ENCODE measurements at regions of chr18 and their contacts with region 1.

Region 1: GRCh38 chr18:58529714-58530354 is 99.1 kb downstream of the ALPK2 start:
- DNase-seq: peak; percentile 69
- ATAC-seq: peak; percentile 34; the same call in 2 of the 3 replicates
- H3K4me3 ChIP-seq: no peak overlapping the region
- H3K27ac ChIP-seq: no peak overlapping the region
- H3K4me1 ChIP-seq: peaks cover 57% of the 10 kb centered on the region
- H3K27me3 ChIP-seq: no peaks in the 10 kb centered on the region
- CTCF ChIP-seq: peak; percentile 92
- EP300 ChIP-seq: peak in 1 of 2 experiments; percentile 9; a peak in 1 of 4 replicates
- POLR2A ChIP-seq: no peak
- RAD21 ChIP-seq: peak; percentile 90

Region 2: DNA sequence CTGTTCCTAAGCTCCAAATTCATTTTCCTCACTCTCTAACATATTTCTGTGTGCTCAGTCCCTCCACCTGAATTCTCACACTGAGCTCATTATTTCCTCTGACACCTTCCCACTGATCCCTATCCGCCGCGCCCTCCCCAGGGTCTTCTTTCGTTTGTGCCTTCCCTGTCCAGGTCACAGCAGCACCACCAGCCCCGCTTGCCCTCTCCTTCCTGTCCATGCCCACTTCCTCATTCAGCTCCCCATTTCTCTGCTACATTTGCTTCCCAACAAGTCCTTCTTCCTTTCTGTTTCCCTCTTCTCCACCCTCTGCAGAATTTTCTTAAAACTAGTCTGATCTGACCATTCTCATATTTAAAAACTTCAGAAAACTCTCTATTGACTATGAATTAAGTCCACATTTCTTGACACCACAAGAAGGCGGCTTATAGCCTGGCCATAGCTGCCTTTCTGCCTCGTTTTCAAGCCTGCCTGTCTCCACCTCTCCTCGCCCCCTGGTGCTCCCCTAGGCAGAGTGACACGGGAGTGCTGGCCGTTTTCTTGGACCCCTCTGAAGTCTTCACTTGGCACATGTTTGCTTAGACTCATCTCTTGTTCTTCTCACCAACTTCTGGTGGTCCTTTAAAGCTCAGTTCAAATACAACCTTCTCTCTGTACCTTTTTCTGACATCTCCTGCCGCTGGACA is 1521.7 kb before region 1 on chr18:
- CTCF ChIA-PET with region 1: no interaction called
- POLR2A ChIA-PET with region 1: no interaction called
- in situ Hi-C with region 1: no loop called
- intact Hi-C with region 1: no loop called
- DNase-seq: no peak
- ATAC-seq: no peak
- H3K4me3 ChIP-seq: no peak overlapping the region
- H3K27ac ChIP-seq: no peak overlapping the region
- H3K4me1 ChIP-seq: peaks cover 13% of the 10 kb centered on the region
- H3K27me3 ChIP-seq: no peaks in the 10 kb centered on the region
- CTCF ChIP-seq: no peak
- EP300 ChIP-seq: no peak
- POLR2A ChIP-seq: no peak
- RAD21 ChIP-seq: no peak

Region 3: DNA sequence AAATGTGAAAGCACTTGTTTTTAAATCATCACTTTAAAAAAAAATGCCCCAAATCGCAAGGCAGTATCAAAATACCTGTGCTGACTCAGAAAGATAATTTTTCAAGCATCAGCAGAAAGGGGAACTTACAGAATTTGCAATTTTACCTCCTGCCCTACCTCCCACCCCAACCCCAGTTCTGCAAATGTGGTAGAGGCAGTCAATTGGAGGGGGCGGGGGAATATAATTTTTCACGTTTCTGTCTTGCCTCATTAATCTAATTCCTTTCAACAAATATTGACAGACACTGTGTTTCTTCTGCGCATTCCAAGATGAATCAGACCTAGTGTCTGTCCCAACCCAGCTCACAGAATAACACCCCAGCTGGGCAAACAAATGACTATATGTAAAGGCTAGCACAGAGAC is 22.2 kb after region 1 on chr18:
- CTCF ChIA-PET with region 1: no interaction called
- POLR2A ChIA-PET with region 1: interaction called, 4 read pairs
- in situ Hi-C with region 1: no loop called
- intact Hi-C with region 1: loop called (anchors 2 kb)
- DNase-seq: peak; percentile 68
- ATAC-seq: no peak
- H3K4me3 ChIP-seq: no peak overlapping the region
- H3K27ac ChIP-seq: no peak overlapping the region
- H3K4me1 ChIP-seq: peaks cover 62% of the 10 kb centered on the region
- H3K27me3 ChIP-seq: no peaks in the 10 kb centered on the region
- CTCF ChIP-seq: no peak
- EP300 ChIP-seq: peak in 1 of 2 experiments; percentile 73; a peak in 1 of 4 replicates
- POLR2A ChIP-seq: no peak
- RAD21 ChIP-seq: no peak

Region 4: GRCh38 chr18:58661423-58661822 is 131.6 kb after region 1 on chr18:
- CTCF ChIA-PET with region 1: interaction called, 3 read pairs
- POLR2A ChIA-PET with region 1: no interaction called
- in situ Hi-C with region 1: loop called (anchors 5 kb)
- intact Hi-C with region 1: loop called (anchors 1 kb)
- DNase-seq: no peak
- ATAC-seq: peak; percentile 86
- H3K4me3 ChIP-seq: no peak overlapping the region
- H3K27ac ChIP-seq: no peak overlapping the region
- H3K4me1 ChIP-seq: peaks cover 27% of the 10 kb centered on the region
- H3K27me3 ChIP-seq: no peaks in the 10 kb centered on the region
- CTCF ChIP-seq: peak; percentile 47
- EP300 ChIP-seq: no peak
- POLR2A ChIP-seq: no peak
- RAD21 ChIP-seq: no peak

Region 5: GRCh38 chr18:58768293-58768974 is 238.6 kb after region 1 on chr18:
- CTCF ChIA-PET with region 1: interaction called, 10 read pairs
- POLR2A ChIA-PET with region 1: interaction called, 3 read pairs
- in situ Hi-C with region 1: loop called (anchors 5 kb)
- intact Hi-C with region 1: loop called (anchors 2 kb)
- DNase-seq: peak; percentile 35
- ATAC-seq: peak; percentile 98
- H3K4me3 ChIP-seq: peak overlapping the region; percentile 49 to 68 (median 49); a peak in 5 of 6 replicates
- H3K27ac ChIP-seq: no peak overlapping the region
- H3K4me1 ChIP-seq: peaks cover 52% of the 10 kb centered on the region
- H3K27me3 ChIP-seq: peaks cover 1 to 21% of the 10 kb centered on the region in 2 experiments; a peak in 2 of 5 replicates
- CTCF ChIP-seq: peak; percentile 97
- EP300 ChIP-seq: no peak
- POLR2A ChIP-seq: no peak
- RAD21 ChIP-seq: peak; percentile 86

Region 6: DNA sequence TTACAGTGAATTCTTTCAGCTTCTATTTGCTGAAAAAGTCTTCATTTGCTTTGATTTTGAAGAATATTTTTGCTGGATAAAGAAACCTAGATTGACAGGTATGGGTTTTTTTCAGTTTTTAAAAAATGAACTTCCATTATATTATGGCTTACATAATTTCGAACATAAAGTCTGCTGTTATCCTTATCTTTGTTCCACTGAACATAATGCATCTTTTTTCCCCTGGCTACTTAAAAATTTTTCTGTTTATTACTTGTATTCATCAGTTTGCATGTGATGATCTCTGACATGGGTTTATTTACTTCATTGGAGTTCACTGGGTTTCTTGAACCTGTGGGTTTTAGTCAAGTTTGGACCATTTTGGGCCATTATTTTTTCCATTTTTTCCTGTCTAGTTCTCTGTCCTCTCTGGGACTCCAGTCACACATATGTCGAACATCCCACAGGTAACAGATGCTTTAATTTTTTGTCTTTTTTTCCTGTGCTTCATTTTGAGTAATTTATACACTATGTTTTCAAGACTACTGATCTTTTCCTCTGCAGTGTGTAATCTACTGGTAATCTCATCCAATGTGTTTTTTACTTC is 642.9 kb after region 1 on chr18:
- CTCF ChIA-PET with region 1: no interaction called
- POLR2A ChIA-PET with region 1: no interaction called
- in situ Hi-C with region 1: no loop called
- intact Hi-C with region 1: no loop called
- DNase-seq: no peak
- ATAC-seq: no peak
- H3K4me3 ChIP-seq: no peak overlapping the region
- H3K27ac ChIP-seq: no peak overlapping the region
- H3K4me1 ChIP-seq: no peaks in the 10 kb centered on the region
- H3K27me3 ChIP-seq: peaks cover 0 to 8% of the 10 kb centered on the region in 2 experiments; a peak in 1 of 5 replicates
- CTCF ChIP-seq: no peak
- EP300 ChIP-seq: no peak
- POLR2A ChIP-seq: no peak
- RAD21 ChIP-seq: no peak

Measured in HepG2 (cell line).